Activated CD8-positive, alpha-beta T cell treated with anti-CD3 and anti-CD28 coated beads, Interleukin-2, amount 10 ng/mL, durations not matched to agents 7 days and 5 days (primary cell): ENCODE measurements at regions of chr16 and their contacts with region 1.

Region 1: DNA sequence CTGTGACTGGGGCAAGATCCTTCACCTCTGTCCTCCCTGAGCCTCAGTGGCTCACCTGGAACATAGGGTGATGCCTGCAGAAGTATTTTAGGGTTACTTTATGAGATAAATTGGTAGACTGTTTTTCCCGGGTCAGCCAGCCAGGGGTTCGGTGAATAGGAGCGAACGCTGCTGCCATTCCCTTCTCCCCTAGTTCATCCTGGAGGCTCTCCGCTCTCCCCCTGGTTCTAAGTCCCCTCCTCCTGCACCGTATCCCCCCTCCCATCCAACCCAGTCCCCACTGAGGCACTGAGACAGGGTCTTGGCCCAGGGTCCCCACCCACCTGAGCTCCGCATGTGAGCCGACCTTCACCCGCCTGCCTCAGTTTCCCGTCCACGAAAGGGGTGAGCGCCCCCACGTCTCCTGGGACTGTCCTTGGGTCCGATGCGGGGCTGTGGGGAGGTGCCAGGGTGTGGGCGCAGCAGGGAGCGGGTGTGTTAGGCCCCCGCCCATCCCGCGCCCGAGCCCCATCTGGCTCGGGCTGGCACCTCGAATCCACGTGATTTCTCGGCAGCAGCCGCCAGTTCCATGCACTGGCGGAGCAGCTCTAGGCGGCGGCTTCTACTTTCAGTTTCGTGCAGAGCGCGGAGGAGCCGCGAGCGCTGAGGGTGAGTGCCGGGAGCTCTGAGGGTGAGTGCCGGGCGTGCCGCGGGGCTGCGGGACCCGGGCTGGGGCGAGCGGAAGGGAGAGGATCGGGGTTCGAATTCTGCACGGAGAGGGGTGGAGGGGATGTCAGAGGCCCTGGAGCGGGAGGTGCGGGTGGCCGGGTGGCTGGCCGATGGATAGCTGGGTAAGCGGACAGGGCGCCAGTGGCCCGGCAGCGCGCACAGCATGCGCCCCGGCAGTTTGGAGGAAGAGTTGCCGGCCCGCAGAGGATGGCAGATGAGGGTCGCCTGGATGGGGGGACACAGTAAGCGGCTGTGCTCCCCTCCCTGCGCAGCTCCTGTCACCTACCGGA is at the start of gene NLRC5:
- DNase-seq: peak; percentile 95
- ATAC-seq: peak; percentile 83
- H3K4me3 Mint-ChIP-seq: peak within 1 kb of the TSS; percentile 100
- H3K27ac Mint-ChIP-seq: peak within 1 kb of the TSS; percentile 99
- H3K4me1 Mint-ChIP-seq: peaks cover 64% of the 10 kb centered on the region
- H3K27me3 Mint-ChIP-seq: no peaks in the 10 kb centered on the region
- total RNA-seq, gene NLRC5: 280 to 291 TPM

Region 2: DNA sequence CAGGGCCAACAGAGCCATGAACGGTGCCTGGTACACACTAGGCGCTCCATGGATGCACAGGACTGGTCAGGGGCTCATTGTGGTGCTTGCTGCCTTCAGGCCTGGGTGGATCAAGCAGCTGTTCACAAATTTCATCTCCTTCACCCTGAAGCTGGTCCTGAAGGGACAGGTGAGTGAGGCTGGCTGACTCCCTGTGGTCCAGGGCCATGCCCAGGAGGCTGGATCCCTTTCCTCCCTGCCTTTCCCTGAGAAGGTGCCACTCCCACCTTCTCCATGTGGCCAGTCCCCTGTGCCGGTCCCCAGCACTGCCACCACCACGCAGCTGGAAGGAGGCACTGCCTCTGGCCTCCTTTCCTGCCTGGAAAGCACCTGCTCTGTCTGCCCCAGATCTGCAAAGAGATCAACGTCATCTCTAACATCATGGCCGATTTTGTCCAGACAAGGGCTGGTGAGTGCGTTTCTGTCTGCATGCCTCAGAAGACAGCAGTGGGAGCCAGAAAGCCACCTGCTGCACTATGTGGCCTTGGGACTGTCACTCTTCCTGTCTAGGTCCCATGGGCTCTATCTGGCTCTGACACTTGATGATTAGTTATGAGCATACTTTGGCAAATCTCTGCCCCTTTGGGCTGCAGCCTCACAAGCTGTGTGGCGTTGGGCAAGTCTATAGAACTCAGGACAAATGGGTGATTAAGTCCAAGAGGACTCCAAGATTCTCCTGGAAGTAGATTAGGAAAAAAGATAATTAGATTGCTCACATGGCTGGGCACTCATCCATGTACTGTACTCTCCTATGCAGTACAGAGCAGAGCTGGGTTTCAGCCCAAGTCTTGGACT is 18.1 kb before region 1 on chr16:
- CTCF ChIA-PET with region 1: interaction called, 107 read pairs
- POLR2A ChIA-PET with region 1: interaction called, 21 read pairs
- DNase-seq: no peak
- ATAC-seq: no peak
- H3K4me3 Mint-ChIP-seq: no peak overlapping the region
- H3K27ac Mint-ChIP-seq: no peak overlapping the region
- H3K4me1 Mint-ChIP-seq: peaks cover 25% of the 10 kb centered on the region
- H3K27me3 Mint-ChIP-seq: no peaks in the 10 kb centered on the region

Region 3: GRCh38 chr16:57000271-57001025 is 11.2 kb after region 1 on chr16:
- CTCF ChIA-PET with region 1: interaction called, 21 read pairs
- POLR2A ChIA-PET with region 1: interaction called, 58 read pairs
- DNase-seq: peak; percentile 58
- ATAC-seq: peak; percentile 45
- H3K4me3 Mint-ChIP-seq: peak overlapping the region; percentile 52
- H3K27ac Mint-ChIP-seq: peak overlapping the region; percentile 92
- H3K4me1 Mint-ChIP-seq: peaks cover 93% of the 10 kb centered on the region
- H3K27me3 Mint-ChIP-seq: no peaks in the 10 kb centered on the region

Region 4: DNA sequence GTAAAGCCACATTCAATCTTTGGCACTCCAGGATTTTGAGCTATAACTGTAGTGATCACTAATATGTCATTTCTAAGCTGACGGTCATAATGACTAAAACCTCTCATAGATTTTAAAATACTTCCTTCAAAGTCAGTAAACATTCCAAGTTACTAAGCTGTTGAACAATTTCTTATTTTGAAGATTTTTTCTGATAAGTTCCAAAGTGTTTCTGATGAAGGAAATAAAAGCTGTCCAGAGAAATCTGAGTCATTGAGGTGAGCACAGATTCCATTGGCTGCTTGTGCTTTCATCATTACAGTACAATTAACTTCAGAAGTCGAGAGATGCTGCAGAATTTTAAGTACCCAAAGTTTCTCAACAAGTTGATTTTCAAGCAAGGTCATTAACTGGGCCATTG is 24.0 kb after region 1 on chr16:
- CTCF ChIA-PET with region 1: interaction called, 6 read pairs
- POLR2A ChIA-PET with region 1: interaction called, 58 read pairs
- DNase-seq: no peak
- ATAC-seq: no peak
- H3K4me3 Mint-ChIP-seq: peak overlapping the region; percentile 59
- H3K27ac Mint-ChIP-seq: peak overlapping the region; percentile 83
- H3K4me1 Mint-ChIP-seq: peaks cover 82% of the 10 kb centered on the region
- H3K27me3 Mint-ChIP-seq: no peaks in the 10 kb centered on the region

Region 5: GRCh38 chr16:57023541-57024249 is 34.4 kb after region 1 on chr16:
- CTCF ChIA-PET with region 1: interaction called, 8 read pairs
- POLR2A ChIA-PET with region 1: interaction called, 23 read pairs
- DNase-seq: peak; percentile 76
- ATAC-seq: peak; percentile 81
- H3K4me3 Mint-ChIP-seq: peak overlapping the region; percentile 41
- H3K27ac Mint-ChIP-seq: peak overlapping the region; percentile 73
- H3K4me1 Mint-ChIP-seq: peaks cover 82% of the 10 kb centered on the region
- H3K27me3 Mint-ChIP-seq: no peaks in the 10 kb centered on the region

Region 6: DNA sequence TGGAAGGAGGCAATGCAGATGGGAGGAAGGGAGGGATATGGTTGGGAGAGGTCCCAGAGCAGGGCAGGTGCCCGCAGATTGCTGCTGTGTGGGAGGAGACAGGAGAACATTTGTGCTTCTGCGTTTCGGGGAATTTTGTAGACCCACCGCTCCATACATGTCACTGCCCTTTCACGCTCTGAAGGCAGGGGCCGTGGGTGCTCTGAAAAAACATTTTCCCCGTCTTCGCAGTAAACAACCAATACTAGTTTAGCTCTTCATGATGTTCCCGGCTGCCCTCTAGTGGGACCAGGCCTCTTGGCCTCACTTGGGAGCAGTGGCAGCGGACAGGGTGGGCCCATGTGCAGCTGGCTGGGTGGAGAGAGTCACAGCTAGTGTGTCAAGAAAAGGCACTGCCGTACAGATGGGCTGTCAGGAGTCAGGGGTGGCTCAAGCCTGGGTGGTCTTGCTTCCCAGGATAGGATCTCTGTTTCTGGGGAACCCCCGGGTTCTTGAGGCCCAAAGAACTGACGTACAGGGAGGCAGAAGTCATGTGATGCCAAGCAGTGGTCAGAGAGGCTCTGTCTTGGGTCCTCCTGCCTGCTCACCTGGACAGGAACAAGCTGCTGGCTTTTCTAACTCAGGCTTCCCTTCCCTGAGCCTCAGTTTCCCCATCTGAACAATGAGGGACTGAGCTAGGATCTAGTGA is 56.6 kb after region 1 on chr16:
- CTCF ChIA-PET with region 1: interaction called, 35 read pairs
- POLR2A ChIA-PET with region 1: interaction called, 87 read pairs
- DNase-seq: peak; percentile 50
- ATAC-seq: no peak
- H3K4me3 Mint-ChIP-seq: no peak overlapping the region
- H3K27ac Mint-ChIP-seq: peak overlapping the region; percentile 70
- H3K4me1 Mint-ChIP-seq: peaks cover 47% of the 10 kb centered on the region
- H3K27me3 Mint-ChIP-seq: no peaks in the 10 kb centered on the region